ENCODE measurements at regions of chr6 and their contacts with region 1.

Region 1: DNA sequence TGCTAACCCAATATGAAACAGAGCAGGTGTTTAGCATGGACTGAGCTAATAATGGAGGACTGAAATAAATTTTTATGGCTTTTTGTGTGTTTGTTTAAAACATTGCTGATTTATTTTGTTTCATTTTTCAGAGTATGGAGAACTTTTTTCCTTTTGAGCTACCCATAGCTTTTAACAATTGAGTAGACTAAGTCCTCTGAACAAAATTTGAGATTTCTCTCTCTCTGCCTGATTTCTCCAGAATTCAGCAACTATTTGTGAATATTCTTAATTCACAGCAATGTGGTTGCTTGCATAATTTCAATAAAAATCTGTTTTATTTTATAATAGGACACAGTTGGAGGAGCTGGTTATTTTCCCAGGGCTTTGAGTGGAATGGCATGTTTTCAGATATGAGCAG is 103.7 kb downstream of the TPBG start:
- DNase-seq: no peak
- H3K4me3 ChIP-seq: no peak overlapping the region
- H3K27ac ChIP-seq: no peak overlapping the region
- H3K4me1 ChIP-seq: no peaks in the 10 kb centered on the region
- H3K27me3 ChIP-seq: no peaks in the 10 kb centered on the region
- CTCF ChIP-seq: no peak

Region 2: DNA sequence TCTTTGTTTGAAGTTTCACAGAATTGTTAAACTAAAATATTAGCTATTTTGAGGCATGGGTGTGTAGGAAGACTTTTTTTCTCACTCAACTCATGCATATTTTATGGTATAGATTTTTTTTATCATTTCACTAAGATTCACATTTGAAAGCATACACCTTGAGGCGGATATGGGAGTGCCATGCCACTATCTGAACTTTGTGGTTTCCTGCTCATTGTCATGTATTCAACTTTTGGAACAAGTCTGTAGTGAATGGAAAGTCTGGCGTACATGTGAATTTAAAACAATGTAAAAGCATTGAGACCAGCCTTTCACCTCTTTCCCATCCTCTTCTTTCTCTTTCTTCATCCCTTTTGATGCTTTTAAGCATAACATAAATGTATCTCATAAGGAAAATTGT is 44.2 kb after region 1 on chr6:
- CTCF ChIA-PET with region 1: no interaction called
- POLR2A ChIA-PET with region 1: interaction called, 11 read pairs
- intact Hi-C with region 1: no loop called
- DNase-seq: no peak
- H3K4me3 ChIP-seq: no peak overlapping the region
- H3K27ac ChIP-seq: no peak overlapping the region
- H3K4me1 ChIP-seq: no peaks in the 10 kb centered on the region
- H3K27me3 ChIP-seq: no peaks in the 10 kb centered on the region
- CTCF ChIP-seq: no peak